CD4-positive, alpha-beta memory T cell (primary cell): ENCODE measurements at regions of chr1 and their contacts with region 1.

Region 1: GRCh38 chr1:244801246-244801645 is 34.2 kb upstream of the COX20 start:
- DNase-seq: peak; percentile 38 to 48 (median 42)
- H3K4me3 ChIP-seq: no peak overlapping the region
- H3K4me3 Mint-ChIP-seq: peak overlapping the region in 1 of 8 donors; percentile 46
- H3K27ac ChIP-seq: no peak overlapping the region
- H3K27ac Mint-ChIP-seq: peak overlapping the region in 2 of 7 donors; percentile 48 to 49
- H3K4me1 ChIP-seq: no peaks in the 10 kb centered on the region
- H3K4me1 Mint-ChIP-seq: peaks cover 2 to 4% (median 3%) of the 10 kb centered on the region in 4 donors
- H3K27me3 ChIP-seq: no peaks in the 10 kb centered on the region
- H3K27me3 Mint-ChIP-seq: peaks cover 3 to 7% of the 10 kb centered on the region in 2 donors

Region 2: GRCh38 chr1:243483071-243483771 is 1318.0 kb before region 1 on chr1:
- CTCF ChIA-PET with region 1: no interaction called
- POLR2A ChIA-PET with region 1: no interaction called
- intact Hi-C with region 1: no loop called
- DNase-seq: peak in 2 of 5 donors; percentile 15
- H3K4me3 ChIP-seq: peak overlapping the region in 1 of 2 donors; percentile 19
- H3K4me3 Mint-ChIP-seq: peak overlapping the region; percentile 71 to 84 (median 74)
- H3K27ac ChIP-seq: no peak overlapping the region
- H3K27ac Mint-ChIP-seq: peak overlapping the region in 2 of 7 donors; percentile 59 to 67
- H3K4me1 ChIP-seq: peaks cover 12% of the 10 kb centered on the region
- H3K4me1 Mint-ChIP-seq: peaks cover 15 to 23% (median 20%) of the 10 kb centered on the region in 4 donors
- H3K27me3 ChIP-seq: no peaks in the 10 kb centered on the region
- H3K27me3 Mint-ChIP-seq: peaks cover 1 to 6% of the 10 kb centered on the region in 2 donors

Region 3: DNA sequence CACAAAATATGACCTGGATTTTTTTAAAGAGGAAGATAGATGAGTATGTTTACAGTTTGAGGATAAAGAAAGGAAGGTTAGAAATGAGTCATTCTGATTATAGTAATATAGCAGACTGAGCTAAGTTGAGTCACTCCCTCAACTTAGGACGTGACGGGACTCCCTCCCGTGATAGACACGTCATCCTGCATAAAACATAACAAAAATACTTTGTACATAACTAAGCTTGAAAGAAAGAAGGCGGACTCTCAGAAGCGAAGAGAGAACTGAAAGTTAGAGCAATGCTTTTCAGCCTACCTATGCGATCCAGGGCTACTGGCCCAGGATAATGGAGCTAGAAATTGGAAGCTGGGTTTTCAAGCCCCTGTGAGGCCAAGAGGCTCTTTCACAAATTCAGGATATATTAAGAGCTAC is 201.3 kb before region 1 on chr1:
- CTCF ChIA-PET with region 1: interaction called, 189 read pairs
- POLR2A ChIA-PET with region 1: interaction called, 4 read pairs
- intact Hi-C with region 1: loop called (anchors 1 kb)
- DNase-seq: peak; percentile 18 to 72 (median 33)
- H3K4me3 ChIP-seq: no peak overlapping the region
- H3K4me3 Mint-ChIP-seq: peak overlapping the region in 6 of 8 donors; percentile 28 to 78 (median 58)
- H3K27ac ChIP-seq: no peak overlapping the region
- H3K27ac Mint-ChIP-seq: peak overlapping the region; percentile 78 to 94 (median 86)
- H3K4me1 ChIP-seq: peaks cover 3% of the 10 kb centered on the region
- H3K4me1 Mint-ChIP-seq: peaks cover 3 to 11% (median 10%) of the 10 kb centered on the region in 4 donors
- H3K27me3 ChIP-seq: no peaks in the 10 kb centered on the region
- H3K27me3 Mint-ChIP-seq: peaks cover 1 to 2% of the 10 kb centered on the region in 2 donors

Region 4: GRCh38 chr1:244761279-244761678 is 40.0 kb before region 1 on chr1:
- CTCF ChIA-PET with region 1: no interaction called
- POLR2A ChIA-PET with region 1: no interaction called
- intact Hi-C with region 1: no loop called
- DNase-seq: no peak
- H3K4me3 ChIP-seq: no peak overlapping the region
- H3K4me3 Mint-ChIP-seq: no peak overlapping the region
- H3K27ac ChIP-seq: no peak overlapping the region
- H3K27ac Mint-ChIP-seq: no peak overlapping the region
- H3K4me1 ChIP-seq: no peaks in the 10 kb centered on the region
- H3K4me1 Mint-ChIP-seq: no peaks in the 10 kb centered on the region
- H3K27me3 ChIP-seq: no peaks in the 10 kb centered on the region
- H3K27me3 Mint-ChIP-seq: peaks cover 1 to 5% of the 10 kb centered on the region in 2 donors

Region 5: GRCh38 chr1:244813327-244813726 is 12.1 kb after region 1 on chr1:
- CTCF ChIA-PET with region 1: interaction called, 11 read pairs
- POLR2A ChIA-PET with region 1: no interaction called
- intact Hi-C with region 1: no loop called
- DNase-seq: no peak
- H3K4me3 ChIP-seq: no peak overlapping the region
- H3K4me3 Mint-ChIP-seq: no peak overlapping the region
- H3K27ac ChIP-seq: no peak overlapping the region
- H3K27ac Mint-ChIP-seq: no peak overlapping the region
- H3K4me1 ChIP-seq: no peaks in the 10 kb centered on the region
- H3K4me1 Mint-ChIP-seq: no peaks in the 10 kb centered on the region
- H3K27me3 ChIP-seq: peaks cover 3% of the 10 kb centered on the region
- H3K27me3 Mint-ChIP-seq: peaks cover 17% of the 10 kb centered on the region in 2 donors

Region 6: DNA sequence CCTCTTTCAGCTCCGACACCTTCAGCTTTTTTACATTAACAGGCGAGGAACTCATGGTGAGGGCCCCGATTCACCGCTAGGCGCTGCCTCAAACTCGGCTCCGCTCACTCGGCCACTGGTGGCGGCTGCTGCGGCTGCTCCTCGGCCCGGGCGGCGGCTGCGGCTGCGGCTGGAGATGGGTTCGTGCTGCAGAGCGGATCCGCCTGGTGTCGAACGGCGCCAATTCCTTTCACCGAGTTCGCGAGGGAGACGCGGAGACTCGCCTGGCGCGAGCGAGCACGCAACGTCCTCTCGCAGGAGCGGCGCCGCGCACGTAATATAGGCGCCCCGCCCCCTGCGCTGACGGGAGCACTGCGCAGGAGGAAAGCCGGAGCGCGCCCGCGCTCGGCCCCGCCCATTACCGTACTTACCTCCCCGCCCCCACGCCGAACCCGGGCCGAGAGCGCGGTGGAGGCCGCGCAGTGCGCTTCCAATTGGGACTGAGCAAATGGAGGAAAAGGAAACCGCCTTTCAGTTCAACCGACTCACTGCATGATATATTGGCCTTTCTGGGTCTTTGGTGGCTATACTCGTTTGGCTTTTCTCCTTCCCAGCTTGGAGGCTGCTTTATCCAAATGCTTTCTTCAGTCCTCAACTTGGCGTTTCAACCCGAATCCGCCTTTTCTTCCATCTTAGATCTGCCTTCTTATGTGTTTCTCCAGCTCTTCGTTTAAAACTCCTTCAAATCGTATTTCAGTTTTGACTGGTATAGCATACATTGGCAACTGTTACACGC is 63.2 kb after region 1 on chr1 and contains the start of gene HNRNPU:
- CTCF ChIA-PET with region 1: interaction called, 34 read pairs
- POLR2A ChIA-PET with region 1: interaction called, 7 read pairs
- intact Hi-C with region 1: loop called (anchors 5 kb)
- DNase-seq: peak; percentile 94 to 98 (median 98)
- H3K4me3 ChIP-seq: peak within 1 kb of the TSS; percentile 64 to 77
- H3K4me3 Mint-ChIP-seq: peak within 1 kb of the TSS; percentile 86 to 97 (median 96)
- H3K27ac ChIP-seq: peak within 1 kb of the TSS; percentile 99
- H3K27ac Mint-ChIP-seq: peak within 1 kb of the TSS; percentile 97 to 100 (median 99)
- H3K4me1 ChIP-seq: peaks cover 39% of the 10 kb centered on the region
- H3K4me1 Mint-ChIP-seq: peaks cover 29 to 70% (median 40%) of the 10 kb centered on the region in 4 donors
- H3K27me3 ChIP-seq: no peaks in the 10 kb centered on the region
- H3K27me3 Mint-ChIP-seq: peaks cover 0 to 1% of the 10 kb centered on the region in 2 donors
- total RNA-seq, gene HNRNPU: 370 to 385 TPM

Region 7: GRCh38 chr1:244970661-244971551 is 169.7 kb after region 1 on chr1:
- CTCF ChIA-PET with region 1: interaction called, 6 read pairs
- POLR2A ChIA-PET with region 1: interaction called, 9 read pairs
- intact Hi-C with region 1: loop called (anchors 1 kb)
- DNase-seq: peak; percentile 95 to 97 (median 96)
- H3K4me3 ChIP-seq: peak overlapping the region; percentile 85 to 95
- H3K4me3 Mint-ChIP-seq: peak overlapping the region; percentile 87 to 98 (median 94)
- H3K27ac ChIP-seq: peak overlapping the region; percentile 100
- H3K27ac Mint-ChIP-seq: peak overlapping the region; percentile 95 to 99 (median 99)
- H3K4me1 ChIP-seq: peaks cover 20% of the 10 kb centered on the region
- H3K4me1 Mint-ChIP-seq: peaks cover 12 to 31% (median 18%) of the 10 kb centered on the region in 4 donors
- H3K27me3 ChIP-seq: no peaks in the 10 kb centered on the region
- H3K27me3 Mint-ChIP-seq: no peaks in the 10 kb centered on the region

Region 8: GRCh38 chr1:245045087-245045881 is 244.0 kb after region 1 on chr1:
- CTCF ChIA-PET with region 1: interaction called, 231 read pairs
- POLR2A ChIA-PET with region 1: interaction called, 11 read pairs
- intact Hi-C with region 1: loop called (anchors 1 kb)
- DNase-seq: no peak
- H3K4me3 ChIP-seq: no peak overlapping the region
- H3K4me3 Mint-ChIP-seq: no peak overlapping the region
- H3K27ac ChIP-seq: no peak overlapping the region
- H3K27ac Mint-ChIP-seq: peak overlapping the region in 1 of 7 donors; percentile 31
- H3K4me1 ChIP-seq: no peaks in the 10 kb centered on the region
- H3K4me1 Mint-ChIP-seq: peaks cover 0 to 3% (median under 1%) of the 10 kb centered on the region in 4 donors
- H3K27me3 ChIP-seq: no peaks in the 10 kb centered on the region
- H3K27me3 Mint-ChIP-seq: peaks cover 0 to 1% of the 10 kb centered on the region in 2 donors

Region 9: DNA sequence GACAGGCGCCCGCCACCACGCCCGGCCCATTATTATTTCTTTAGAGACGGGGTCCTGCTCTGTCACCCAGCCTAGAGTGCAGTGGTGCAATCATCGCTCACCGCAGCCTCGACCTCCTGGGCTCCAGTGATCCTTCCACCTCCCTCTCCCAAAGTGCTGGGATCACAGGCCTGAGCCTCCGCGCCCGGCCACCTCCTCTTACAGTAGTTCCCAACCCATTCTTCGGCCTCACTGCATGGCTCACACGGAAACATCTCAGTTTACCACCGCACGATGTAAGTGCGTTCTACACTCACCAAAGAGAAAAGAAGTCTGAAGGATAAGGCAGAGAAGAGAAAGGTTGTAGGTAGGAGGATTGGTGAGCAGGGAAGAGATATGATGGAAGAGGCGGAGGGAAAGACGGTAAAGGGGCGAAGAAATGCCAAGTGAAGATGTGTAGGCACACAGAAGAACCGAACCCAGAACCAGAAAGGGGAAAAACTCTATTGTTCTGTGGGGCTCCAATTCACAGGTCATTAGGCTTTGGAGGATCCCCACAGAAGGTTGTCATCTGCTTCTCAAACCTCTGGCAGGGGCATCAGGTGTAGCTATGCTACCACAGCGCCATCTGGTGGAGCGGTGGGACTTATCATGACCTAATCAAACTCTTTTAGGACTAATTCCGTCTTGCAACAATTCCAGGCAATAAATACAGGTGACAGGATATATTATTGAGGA is 1201.6 kb after region 1 on chr1:
- CTCF ChIA-PET with region 1: no interaction called
- POLR2A ChIA-PET with region 1: no interaction called
- intact Hi-C with region 1: loop called (anchors 10 kb)
- DNase-seq: peak; percentile 68 to 77 (median 70)
- H3K4me3 ChIP-seq: no peak overlapping the region
- H3K4me3 Mint-ChIP-seq: no peak overlapping the region
- H3K27ac ChIP-seq: no peak overlapping the region
- H3K27ac Mint-ChIP-seq: no peak overlapping the region
- H3K4me1 ChIP-seq: no peaks in the 10 kb centered on the region
- H3K4me1 Mint-ChIP-seq: no peaks in the 10 kb centered on the region
- H3K27me3 ChIP-seq: no peaks in the 10 kb centered on the region
- H3K27me3 Mint-ChIP-seq: no peaks in the 10 kb centered on the region